IMR-90 (cell line): ENCODE measurements at regions of chr1 and their contacts with region 1.

Region 1: DNA sequence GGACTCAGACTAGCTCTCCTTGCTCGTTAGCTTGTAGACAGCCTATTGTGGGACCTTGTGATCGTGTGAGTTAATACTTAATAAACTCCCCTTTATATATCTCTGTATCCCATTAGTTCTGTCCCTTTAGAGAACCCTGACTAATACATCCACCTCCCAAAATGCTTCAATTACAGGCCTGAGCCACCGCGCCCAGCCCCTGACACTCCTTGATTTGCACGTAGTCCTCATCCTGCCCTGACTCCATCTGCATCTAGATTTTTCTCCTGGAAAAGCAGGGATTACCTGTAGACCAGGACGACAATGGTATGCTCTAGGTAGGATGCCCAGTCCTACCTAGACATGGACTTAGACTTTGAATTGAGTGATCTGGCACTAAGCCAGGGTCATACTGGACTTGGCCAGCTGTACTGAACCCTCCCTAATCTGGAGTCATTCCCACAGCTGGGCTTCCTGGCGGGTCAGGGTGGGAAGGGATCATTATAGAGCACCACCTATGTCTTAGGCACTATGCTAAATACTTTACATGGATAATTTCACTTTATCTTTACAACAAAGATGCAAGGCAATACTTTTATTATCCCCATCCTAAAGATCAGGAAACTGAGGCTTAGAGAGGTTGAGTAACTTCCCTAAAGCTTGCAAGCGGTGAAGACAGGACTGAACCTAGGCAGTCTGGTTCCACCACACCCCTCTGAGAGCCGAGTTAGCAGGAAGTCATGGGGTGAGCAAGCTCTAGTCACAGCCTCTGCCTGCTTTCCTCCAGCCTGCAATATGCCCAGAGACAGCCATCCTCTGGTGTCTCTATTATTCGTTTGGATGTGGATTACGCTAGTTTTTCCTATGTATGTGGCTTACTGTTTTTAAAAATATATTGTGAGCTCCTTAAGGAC is 89.4 kb downstream of the DTL start:
- DNase-seq: peak; percentile 16
- ATAC-seq: peak; percentile 40; the same call in 1 of the 2 replicates
- H3K4me3 ChIP-seq: no peak overlapping the region
- H3K27ac ChIP-seq: no peak overlapping the region
- H3K4me1 ChIP-seq: no peaks in the 10 kb centered on the region
- H3K27me3 ChIP-seq: no peaks in the 10 kb centered on the region
- CTCF ChIP-seq: no peak
- POLR2A ChIP-seq: no peak
- RAD21 ChIP-seq: no peak

Region 2: DNA sequence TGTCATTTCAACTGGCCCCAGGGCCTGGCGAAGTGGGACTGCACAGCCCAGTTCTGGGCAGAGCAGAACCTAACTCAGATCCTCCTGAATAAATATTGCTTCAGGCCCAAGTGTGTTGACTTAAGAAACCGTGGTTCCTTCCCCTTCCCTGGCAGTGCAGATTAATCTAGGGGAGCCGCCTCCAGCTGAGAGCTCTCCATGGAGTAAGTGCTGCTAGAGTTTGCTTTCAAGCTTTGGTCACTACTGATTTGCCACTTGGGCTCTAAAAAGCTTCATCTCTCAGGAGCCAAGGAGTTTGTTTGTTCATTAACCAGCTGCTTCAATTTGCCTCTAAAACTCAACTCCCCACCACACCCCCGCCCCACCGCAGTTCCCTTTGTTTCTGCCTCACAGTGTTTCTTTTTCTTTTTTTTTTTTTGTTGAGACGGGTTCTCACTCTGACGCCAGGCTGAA is 22.7 kb after region 1 on chr1:
- CTCF ChIA-PET with region 1: no interaction called
- POLR2A ChIA-PET with region 1: no interaction called
- dilution Hi-C with region 1: no loop called
- in situ Hi-C with region 1: no loop called
- intact Hi-C with region 1: no loop called
- DNase-seq: no peak
- ATAC-seq: no peak
- H3K4me3 ChIP-seq: no peak overlapping the region
- H3K27ac ChIP-seq: no peak overlapping the region
- H3K4me1 ChIP-seq: no peaks in the 10 kb centered on the region
- H3K27me3 ChIP-seq: no peaks in the 10 kb centered on the region
- CTCF ChIP-seq: no peak
- POLR2A ChIP-seq: no peak
- RAD21 ChIP-seq: no peak

Region 3: GRCh38 chr1:212162635-212163034 is 37.7 kb after region 1 on chr1:
- CTCF ChIA-PET with region 1: no interaction called
- POLR2A ChIA-PET with region 1: no interaction called
- dilution Hi-C with region 1: no loop called
- in situ Hi-C with region 1: no loop called
- intact Hi-C with region 1: loop called (anchors 5 kb)
- DNase-seq: peak; percentile 80
- ATAC-seq: peak; percentile 27
- H3K4me3 ChIP-seq: no peak overlapping the region
- H3K27ac ChIP-seq: no peak overlapping the region
- H3K4me1 ChIP-seq: peaks cover 12% of the 10 kb centered on the region
- H3K27me3 ChIP-seq: no peaks in the 10 kb centered on the region
- CTCF ChIP-seq: no peak
- POLR2A ChIP-seq: no peak
- RAD21 ChIP-seq: no peak

Region 4: DNA sequence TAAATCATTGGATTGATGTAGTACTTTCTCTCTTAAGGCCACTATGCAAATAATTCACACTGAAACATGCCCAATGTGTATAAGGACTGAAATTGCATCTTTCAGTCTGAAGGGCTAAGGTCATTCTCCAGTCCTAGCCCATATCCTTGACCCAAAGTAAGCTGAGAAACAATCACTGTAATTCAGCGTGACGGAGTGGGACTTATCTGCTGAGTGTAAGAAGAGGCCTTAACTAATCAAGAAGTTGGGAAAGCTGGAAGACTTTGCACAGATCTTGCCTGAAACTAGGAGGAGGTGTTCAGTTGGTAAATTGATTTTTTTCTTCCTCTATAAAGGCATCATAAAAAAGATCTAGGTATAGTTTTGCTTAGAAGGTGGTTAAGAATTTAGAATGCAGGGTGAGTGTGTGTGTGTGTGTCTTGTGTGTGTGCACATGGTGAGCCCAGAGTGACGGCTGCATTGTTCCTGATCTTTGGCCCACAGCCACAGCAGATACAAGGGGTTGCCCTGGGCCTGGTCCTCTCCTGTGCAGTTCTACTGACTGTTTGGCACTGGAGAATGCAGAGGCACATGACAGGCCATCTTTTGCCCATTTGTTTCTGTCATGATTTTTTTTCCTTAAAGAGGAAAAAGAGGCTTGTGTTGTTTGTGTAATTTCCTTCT is 147.0 kb after region 1 on chr1:
- CTCF ChIA-PET with region 1: no interaction called
- POLR2A ChIA-PET with region 1: interaction called, 11 read pairs
- dilution Hi-C with region 1: no loop called
- in situ Hi-C with region 1: no loop called
- intact Hi-C with region 1: no loop called
- DNase-seq: no peak
- ATAC-seq: no peak
- H3K4me3 ChIP-seq: no peak overlapping the region
- H3K27ac ChIP-seq: peak overlapping the region; percentile 41; the same call in 1 of the 2 replicates
- H3K4me1 ChIP-seq: peaks cover 3% of the 10 kb centered on the region; the same call in 1 of the 2 replicates
- H3K27me3 ChIP-seq: peaks cover 10% of the 10 kb centered on the region; the same call in 1 of the 2 replicates
- CTCF ChIP-seq: no peak
- POLR2A ChIP-seq: no peak
- RAD21 ChIP-seq: no peak